ENCODE measurements at regions of chr6 and their contacts with region 1.

Region 1: GRCh38 chr6:2862712-2863181 is 21.1 kb upstream of the SERPINB1 start:
- DNase-seq: no peak
- H3K4me3 ChIP-seq: no peak overlapping the region
- H3K27ac ChIP-seq: no peak overlapping the region
- H3K4me1 ChIP-seq: no peaks in the 10 kb centered on the region
- H3K27me3 ChIP-seq: no peaks in the 10 kb centered on the region
- CTCF ChIP-seq: no peak

Region 2: GRCh38 chr6:2651961-2652360 is 210.8 kb before region 1 on chr6:
- CTCF ChIA-PET with region 1: no interaction called
- POLR2A ChIA-PET with region 1: no interaction called
- intact Hi-C with region 1: no loop called
- DNase-seq: no peak
- H3K4me3 ChIP-seq: no peak overlapping the region
- H3K27ac ChIP-seq: no peak overlapping the region
- H3K4me1 ChIP-seq: no peaks in the 10 kb centered on the region
- H3K27me3 ChIP-seq: no peaks in the 10 kb centered on the region
- CTCF ChIP-seq: no peak

Region 3: DNA sequence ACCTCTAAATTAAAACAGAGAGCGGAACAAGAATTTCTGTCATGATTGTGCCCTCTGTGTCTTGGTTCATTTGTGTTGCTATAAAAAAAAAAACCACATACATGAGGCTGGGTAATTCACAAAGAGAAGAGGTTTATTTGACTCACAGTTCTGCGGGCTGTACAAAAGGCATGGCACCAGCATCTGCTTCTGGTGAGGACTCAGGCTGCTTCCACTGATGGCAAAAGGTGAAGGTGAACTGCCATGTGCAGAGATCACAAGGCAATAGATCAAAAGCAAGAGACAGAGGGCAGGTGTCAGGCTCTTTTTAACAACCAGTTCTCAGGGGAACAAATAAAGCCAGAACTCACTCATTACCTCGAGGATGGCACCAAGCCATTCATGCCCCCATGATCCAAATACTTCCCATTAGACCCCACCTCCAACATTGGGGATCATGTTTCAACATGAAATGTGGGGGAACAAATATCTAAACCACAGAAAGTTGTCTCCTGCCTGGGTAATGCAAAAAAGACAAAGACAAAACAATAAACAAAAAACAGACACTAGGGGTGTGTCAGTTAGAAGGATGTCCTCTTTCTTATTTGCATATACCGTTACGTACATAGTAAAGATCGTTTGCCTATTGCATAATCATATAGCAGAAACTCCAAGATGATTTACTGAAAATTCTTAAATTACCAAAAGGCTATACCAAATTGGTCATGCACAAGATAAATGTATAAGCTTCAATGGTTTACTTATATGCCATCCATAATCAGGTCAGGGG is 23.4 kb after region 1 on chr6:
- CTCF ChIA-PET with region 1: no interaction called
- POLR2A ChIA-PET with region 1: no interaction called
- intact Hi-C with region 1: no loop called
- DNase-seq: no peak
- H3K4me3 ChIP-seq: no peak overlapping the region
- H3K27ac ChIP-seq: no peak overlapping the region
- H3K4me1 ChIP-seq: no peaks in the 10 kb centered on the region
- H3K27me3 ChIP-seq: no peaks in the 10 kb centered on the region
- CTCF ChIP-seq: no peak

Region 4: DNA sequence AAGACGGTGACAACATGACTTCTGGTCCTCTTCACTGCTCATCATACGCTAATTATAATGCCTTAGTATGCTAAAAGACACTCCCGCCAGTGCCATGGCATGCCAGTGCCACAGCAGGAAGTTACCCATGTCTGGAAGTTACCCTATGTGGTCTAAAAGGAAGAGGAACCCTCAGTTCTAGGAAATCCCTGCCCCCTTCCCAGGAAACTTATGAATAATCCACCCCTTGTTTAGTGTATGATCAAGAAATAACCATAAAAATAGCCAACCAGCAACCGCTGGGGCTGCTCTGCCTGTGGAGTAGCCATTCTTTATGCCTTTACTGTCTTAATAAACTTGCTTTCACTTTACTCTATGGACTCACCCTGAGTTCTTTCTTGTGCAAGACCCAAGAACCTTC is 56.2 kb after region 1 on chr6:
- CTCF ChIA-PET with region 1: interaction called, 11 read pairs
- POLR2A ChIA-PET with region 1: no interaction called
- intact Hi-C with region 1: no loop called
- DNase-seq: no peak
- H3K4me3 ChIP-seq: no peak overlapping the region
- H3K27ac ChIP-seq: no peak overlapping the region
- H3K4me1 ChIP-seq: no peaks in the 10 kb centered on the region
- H3K27me3 ChIP-seq: no peaks in the 10 kb centered on the region
- CTCF ChIP-seq: no peak

Region 5: GRCh38 chr6:2931970-2932748 is 69.4 kb after region 1 on chr6:
- CTCF ChIA-PET with region 1: no interaction called
- POLR2A ChIA-PET with region 1: no interaction called
- intact Hi-C with region 1: no loop called
- DNase-seq: peak; percentile 70 to 84
- H3K4me3 ChIP-seq: no peak overlapping the region
- H3K27ac ChIP-seq: peak overlapping the region; percentile 46
- H3K4me1 ChIP-seq: peaks cover 3% of the 10 kb centered on the region; the same call in 1 of the 2 replicates
- H3K27me3 ChIP-seq: no peaks in the 10 kb centered on the region
- CTCF ChIP-seq: peak; percentile 83

Measured in PC-9 (cell line).